CD4-positive, alpha-beta memory T cell (primary cell): ENCODE measurements at regions of chr2 and their contacts with region 1.

Region 1: GRCh38 chr2:71510196-71510807 is 56.9 kb downstream of the DYSF start:
- DNase-seq: peak; percentile 57 to 69 (median 64)
- H3K4me3 ChIP-seq: no peak overlapping the region
- H3K4me3 Mint-ChIP-seq: no peak overlapping the region
- H3K27ac ChIP-seq: no peak overlapping the region
- H3K27ac Mint-ChIP-seq: no peak overlapping the region
- H3K4me1 ChIP-seq: no peaks in the 10 kb centered on the region
- H3K4me1 Mint-ChIP-seq: peaks cover 0 to 2% (median 1%) of the 10 kb centered on the region in 4 donors
- H3K27me3 ChIP-seq: no peaks in the 10 kb centered on the region
- H3K27me3 Mint-ChIP-seq: peaks cover 2 to 7% of the 10 kb centered on the region in 2 donors

Region 2: GRCh38 chr2:71299507-71299906 is 210.8 kb before region 1 on chr2:
- CTCF ChIA-PET with region 1: interaction called, 391 read pairs
- POLR2A ChIA-PET with region 1: interaction called, 6 read pairs
- intact Hi-C with region 1: loop called (anchors 1 kb)
- DNase-seq: peak in 4 of 5 donors; percentile 30 to 40 (median 34)
- H3K4me3 ChIP-seq: no peak overlapping the region
- H3K4me3 Mint-ChIP-seq: no peak overlapping the region
- H3K27ac ChIP-seq: no peak overlapping the region
- H3K27ac Mint-ChIP-seq: no peak overlapping the region
- H3K4me1 ChIP-seq: no peaks in the 10 kb centered on the region
- H3K4me1 Mint-ChIP-seq: no peaks in the 10 kb centered on the region
- H3K27me3 ChIP-seq: no peaks in the 10 kb centered on the region
- H3K27me3 Mint-ChIP-seq: peaks cover 3 to 9% of the 10 kb centered on the region in 2 donors